ENCODE measurements at regions of chr6 and their contacts with region 1.

Region 1: GRCh38 chr6:107704347-107705013 is 119.6 kb downstream of the SCML4 start:
- DNase-seq: peak in 4 of 5 donors; percentile 26 to 37 (median 30)
- H3K4me3 ChIP-seq: no peak overlapping the region
- H3K4me3 Mint-ChIP-seq: no peak overlapping the region
- H3K27ac ChIP-seq: no peak overlapping the region
- H3K27ac Mint-ChIP-seq: peak overlapping the region; percentile 17 to 87 (median 53)
- H3K4me1 ChIP-seq: peaks cover 14% of the 10 kb centered on the region
- H3K4me1 Mint-ChIP-seq: peaks cover 18 to 44% (median 26%) of the 10 kb centered on the region in 4 donors
- H3K27me3 ChIP-seq: no peaks in the 10 kb centered on the region
- H3K27me3 Mint-ChIP-seq: no peaks in the 10 kb centered on the region

Region 2: DNA sequence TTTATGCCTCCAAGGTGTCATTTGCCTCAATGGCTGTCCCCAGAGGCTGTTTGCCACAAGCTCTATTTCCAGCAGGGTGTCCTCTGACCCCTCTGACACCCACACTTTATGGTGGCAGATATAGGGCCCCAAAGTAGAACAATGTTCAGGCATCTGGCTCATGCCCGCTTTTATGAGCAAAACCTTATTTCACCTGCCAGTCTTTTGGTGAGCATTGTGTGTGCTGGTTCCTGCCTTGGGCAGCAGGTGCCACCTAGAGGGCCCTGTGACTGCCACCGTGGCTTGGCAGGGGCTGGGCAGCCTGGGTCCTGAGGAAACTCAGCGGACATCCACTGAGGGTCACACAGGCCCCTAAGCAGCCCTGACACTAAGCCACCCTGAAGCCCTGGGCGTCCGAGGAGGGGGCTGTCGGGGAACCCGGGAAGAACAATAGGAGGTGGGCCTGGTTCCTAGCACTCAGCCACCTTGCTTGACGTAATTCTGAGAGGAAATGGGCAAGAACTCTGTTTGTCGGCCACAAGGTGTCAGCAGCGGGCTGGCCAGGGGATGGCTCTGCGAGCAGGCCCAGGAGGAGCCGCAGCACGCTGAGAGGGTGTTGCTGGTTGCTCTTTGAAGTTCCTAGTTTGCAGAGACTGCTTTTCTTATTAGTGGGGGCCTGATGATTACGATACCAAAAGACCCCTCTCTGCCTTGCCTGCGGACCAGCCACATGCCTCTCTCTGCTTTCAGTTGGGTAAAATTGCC is 29.3 kb before region 1 on chr6:
- CTCF ChIA-PET with region 1: interaction called, 8 read pairs
- POLR2A ChIA-PET with region 1: no interaction called
- intact Hi-C with region 1: loop called (anchors 2 kb)
- DNase-seq: peak; percentile 83 to 86 (median 84)
- H3K4me3 ChIP-seq: peak overlapping the region in 1 of 2 donors; percentile 6
- H3K4me3 Mint-ChIP-seq: peak overlapping the region in 6 of 8 donors; percentile 49 to 81 (median 64)
- H3K27ac ChIP-seq: no peak overlapping the region
- H3K27ac Mint-ChIP-seq: peak overlapping the region; percentile 32 to 92 (median 91)
- H3K4me1 ChIP-seq: peaks cover 17% of the 10 kb centered on the region
- H3K4me1 Mint-ChIP-seq: peaks cover 6 to 14% (median 11%) of the 10 kb centered on the region in 4 donors
- H3K27me3 ChIP-seq: no peaks in the 10 kb centered on the region
- H3K27me3 Mint-ChIP-seq: no peaks in the 10 kb centered on the region

Region 3: DNA sequence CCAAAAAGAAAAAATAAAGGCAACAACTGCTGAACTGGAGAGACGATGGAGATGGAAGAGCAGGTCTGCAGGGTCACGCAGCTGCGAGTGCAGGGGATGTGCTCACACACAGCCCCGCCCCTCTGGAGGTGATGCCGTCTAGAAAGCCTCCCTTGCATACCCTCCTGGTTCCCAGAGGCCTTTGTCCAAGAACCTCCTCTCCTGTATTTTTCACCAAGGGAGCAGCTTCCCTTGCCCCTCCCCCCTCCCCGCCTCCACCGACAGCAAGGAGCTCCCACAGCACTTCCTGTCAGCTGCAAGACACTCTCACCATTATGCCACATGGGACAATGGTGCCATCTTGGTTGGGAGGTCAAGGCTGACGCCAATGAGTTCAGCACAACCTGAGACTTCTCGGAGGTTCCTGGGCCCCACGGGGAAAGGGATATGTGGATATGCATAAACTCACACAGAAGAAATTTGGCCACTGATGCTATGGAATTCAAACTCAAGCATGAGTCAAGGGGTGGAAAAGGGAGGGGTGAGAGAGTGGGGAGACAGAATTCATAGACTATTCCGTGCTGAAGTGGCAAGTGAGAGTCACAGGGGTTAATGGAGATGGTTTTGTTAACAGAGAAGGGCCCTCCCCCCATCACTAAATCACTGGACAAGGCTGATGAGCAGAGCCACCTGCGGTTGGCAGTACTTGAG is 13.3 kb before region 1 on chr6:
- CTCF ChIA-PET with region 1: interaction called, 11 read pairs
- POLR2A ChIA-PET with region 1: no interaction called
- intact Hi-C with region 1: no loop called
- DNase-seq: no peak
- H3K4me3 ChIP-seq: no peak overlapping the region
- H3K4me3 Mint-ChIP-seq: no peak overlapping the region
- H3K27ac ChIP-seq: no peak overlapping the region
- H3K27ac Mint-ChIP-seq: no peak overlapping the region
- H3K4me1 ChIP-seq: no peaks in the 10 kb centered on the region
- H3K4me1 Mint-ChIP-seq: peaks cover 0 to 3% (median under 1%) of the 10 kb centered on the region in 4 donors
- H3K27me3 ChIP-seq: no peaks in the 10 kb centered on the region
- H3K27me3 Mint-ChIP-seq: peaks cover 0 to 3% of the 10 kb centered on the region in 2 donors

Region 4: DNA sequence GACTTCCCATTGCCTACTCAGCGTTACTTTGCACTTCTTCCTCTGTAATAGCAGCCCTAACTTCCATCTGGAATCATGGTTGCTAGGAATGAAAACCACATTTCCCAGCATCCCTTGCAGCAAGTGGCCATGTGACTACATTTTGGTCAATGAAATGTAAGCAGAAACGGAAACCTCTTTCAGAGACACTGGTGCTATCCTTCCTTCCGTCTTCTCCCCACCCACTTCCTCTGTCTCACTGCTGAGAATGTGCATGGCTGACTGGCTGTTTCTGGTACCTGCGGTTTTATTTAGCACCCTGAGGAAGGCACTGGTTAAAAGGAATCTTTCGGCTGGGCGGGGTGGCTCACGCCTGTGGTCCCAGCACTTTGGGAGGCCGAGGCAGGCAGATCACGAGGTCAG is 12.2 kb after region 1 on chr6:
- CTCF ChIA-PET with region 1: interaction called, 15 read pairs
- POLR2A ChIA-PET with region 1: interaction called, 5 read pairs
- intact Hi-C with region 1: no loop called
- DNase-seq: peak; percentile 83 to 92 (median 87)
- H3K4me3 ChIP-seq: no peak overlapping the region
- H3K4me3 Mint-ChIP-seq: peak overlapping the region in 7 of 8 donors; percentile 40 to 78 (median 74)
- H3K27ac ChIP-seq: no peak overlapping the region
- H3K27ac Mint-ChIP-seq: peak overlapping the region; percentile 89 to 98 (median 94)
- H3K4me1 ChIP-seq: peaks cover 66% of the 10 kb centered on the region
- H3K4me1 Mint-ChIP-seq: peaks cover 57 to 90% (median 75%) of the 10 kb centered on the region in 4 donors
- H3K27me3 ChIP-seq: no peaks in the 10 kb centered on the region
- H3K27me3 Mint-ChIP-seq: no peaks in the 10 kb centered on the region

Region 5: GRCh38 chr6:107866606-107867301 is 162.3 kb after region 1 on chr6:
- CTCF ChIA-PET with region 1: interaction called, 14 read pairs
- POLR2A ChIA-PET with region 1: no interaction called
- intact Hi-C with region 1: no loop called
- DNase-seq: peak; percentile 43 to 52 (median 49)
- H3K4me3 ChIP-seq: no peak overlapping the region
- H3K4me3 Mint-ChIP-seq: peak overlapping the region in 2 of 8 donors; percentile 11 to 20
- H3K27ac ChIP-seq: no peak overlapping the region
- H3K27ac Mint-ChIP-seq: peak overlapping the region in 3 of 7 donors; percentile 22 to 75 (median 42)
- H3K4me1 ChIP-seq: peaks cover 6% of the 10 kb centered on the region
- H3K4me1 Mint-ChIP-seq: peaks cover 0 to 3% (median 2%) of the 10 kb centered on the region in 4 donors
- H3K27me3 ChIP-seq: no peaks in the 10 kb centered on the region
- H3K27me3 Mint-ChIP-seq: peaks cover 0 to 2% of the 10 kb centered on the region in 2 donors

Region 6: GRCh38 chr6:107991061-107991460 is 286.6 kb after region 1 on chr6:
- CTCF ChIA-PET with region 1: no interaction called
- POLR2A ChIA-PET with region 1: no interaction called
- intact Hi-C with region 1: no loop called
- DNase-seq: no peak
- H3K4me3 ChIP-seq: no peak overlapping the region
- H3K4me3 Mint-ChIP-seq: peak overlapping the region in 1 of 8 donors; percentile 1
- H3K27ac ChIP-seq: no peak overlapping the region
- H3K27ac Mint-ChIP-seq: no peak overlapping the region
- H3K4me1 ChIP-seq: no peaks in the 10 kb centered on the region
- H3K4me1 Mint-ChIP-seq: no peaks in the 10 kb centered on the region
- H3K27me3 ChIP-seq: no peaks in the 10 kb centered on the region
- H3K27me3 Mint-ChIP-seq: no peaks in the 10 kb centered on the region